Left colon (tissue), 2 donors: ENCODE measurements at regions of chr6 and their contacts with region 1.

Region 1: GRCh38 chr6:41689171-41690008 is 46.0 kb downstream of the TFEB start:
- DNase-seq: no peak
- ATAC-seq: no peak

Region 2: DNA sequence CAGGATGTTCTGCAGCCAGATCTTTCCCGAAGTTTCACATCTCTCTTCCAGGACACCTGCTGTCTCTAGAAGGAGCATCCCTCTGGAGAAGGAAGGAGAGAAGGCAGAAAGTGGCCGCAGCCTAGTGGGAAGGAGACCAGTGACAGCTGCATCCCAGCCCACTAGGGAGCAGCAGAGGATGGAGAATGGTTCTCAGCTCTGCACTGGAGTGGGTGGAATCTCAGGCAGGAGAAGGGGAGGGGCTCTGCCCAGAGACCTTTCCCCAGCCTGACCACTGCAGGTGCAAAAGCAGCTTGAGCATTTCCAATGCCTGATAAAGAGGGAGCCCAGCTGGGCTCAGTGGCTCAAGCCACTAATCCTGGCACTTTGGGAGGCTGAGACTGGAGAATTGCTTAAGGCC is 321.7 kb before region 1 on chr6:
- intact Hi-C with region 1: loop called (anchors 5 to 10 kb)
- DNase-seq: peak in 1 of 2 donors; percentile 56
- ATAC-seq: peak; percentile 76